Activated CD4-positive, alpha-beta T cell treated with anti-CD3 and anti-CD28 coated beads, Interleukin-2, amount 10 ng/mL, durations not matched to agents 7 days and 5 days (primary cell): ENCODE measurements at regions of chr1 and their contacts with region 1.

Region 1: GRCh38 chr1:206430031-206430983 is 40.0 kb upstream of the IKBKE start:
- DNase-seq: no peak
- H3K4me3 Mint-ChIP-seq: no peak overlapping the region
- H3K27ac Mint-ChIP-seq: no peak overlapping the region
- H3K4me1 Mint-ChIP-seq: peaks cover 17% of the 10 kb centered on the region
- H3K27me3 Mint-ChIP-seq: no peaks in the 10 kb centered on the region

Region 2: DNA sequence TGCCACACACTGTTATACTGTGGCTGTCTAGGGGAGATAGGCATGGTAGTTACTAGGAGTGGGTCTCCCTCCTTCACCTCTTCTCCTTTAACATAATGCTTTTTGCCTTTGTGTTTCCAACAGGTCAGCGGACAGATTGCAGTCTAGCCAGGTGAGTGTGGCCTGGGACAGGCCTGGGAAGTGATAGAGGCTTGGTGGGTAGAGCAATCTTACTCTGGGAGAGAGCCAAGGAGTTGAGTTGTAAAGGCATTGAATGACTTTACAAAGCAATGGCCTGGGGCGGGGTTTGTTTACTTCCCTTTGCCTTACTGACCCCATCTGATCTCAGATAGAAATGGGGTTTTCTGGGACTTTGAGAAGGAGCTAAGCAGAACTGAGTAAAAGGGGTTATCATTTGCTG is 11.1 kb before region 1 on chr1:
- CTCF ChIA-PET with region 1: interaction called, 14 read pairs
- POLR2A ChIA-PET with region 1: interaction called, 3 read pairs
- DNase-seq: no peak
- H3K4me3 Mint-ChIP-seq: no peak overlapping the region
- H3K27ac Mint-ChIP-seq: no peak overlapping the region
- H3K4me1 Mint-ChIP-seq: peaks cover 2% of the 10 kb centered on the region
- H3K27me3 Mint-ChIP-seq: no peaks in the 10 kb centered on the region

Region 3: GRCh38 chr1:206583707-206584648 is 153.7 kb after region 1 on chr1:
- CTCF ChIA-PET with region 1: no interaction called
- POLR2A ChIA-PET with region 1: no interaction called
- DNase-seq: peak; percentile 89
- H3K4me3 Mint-ChIP-seq: peak overlapping the region; percentile 49
- H3K27ac Mint-ChIP-seq: peak overlapping the region; percentile 91
- H3K4me1 Mint-ChIP-seq: peaks cover 93% of the 10 kb centered on the region
- H3K27me3 Mint-ChIP-seq: no peaks in the 10 kb centered on the region